ENCODE measurements at regions of chr5 and their contacts with region 1.

Region 1: GRCh38 chr5:116068028-116068632 is 16.7 kb upstream of the COMMD10 start:
- H3K4me3 Mint-ChIP-seq: no peak overlapping the region
- H3K27ac Mint-ChIP-seq: no peak overlapping the region
- H3K4me1 Mint-ChIP-seq: no peaks in the 10 kb centered on the region
- H3K27me3 Mint-ChIP-seq: no peaks in the 10 kb centered on the region

Region 2: GRCh38 chr5:115309751-115310370 is 758.3 kb before region 1 on chr5:
- intact Hi-C with region 1: loop called (anchors 2 kb)
- H3K4me3 Mint-ChIP-seq: no peak overlapping the region
- H3K27ac Mint-ChIP-seq: no peak overlapping the region
- H3K4me1 Mint-ChIP-seq: no peaks in the 10 kb centered on the region
- H3K27me3 Mint-ChIP-seq: peaks cover 17% of the 10 kb centered on the region

Region 3: DNA sequence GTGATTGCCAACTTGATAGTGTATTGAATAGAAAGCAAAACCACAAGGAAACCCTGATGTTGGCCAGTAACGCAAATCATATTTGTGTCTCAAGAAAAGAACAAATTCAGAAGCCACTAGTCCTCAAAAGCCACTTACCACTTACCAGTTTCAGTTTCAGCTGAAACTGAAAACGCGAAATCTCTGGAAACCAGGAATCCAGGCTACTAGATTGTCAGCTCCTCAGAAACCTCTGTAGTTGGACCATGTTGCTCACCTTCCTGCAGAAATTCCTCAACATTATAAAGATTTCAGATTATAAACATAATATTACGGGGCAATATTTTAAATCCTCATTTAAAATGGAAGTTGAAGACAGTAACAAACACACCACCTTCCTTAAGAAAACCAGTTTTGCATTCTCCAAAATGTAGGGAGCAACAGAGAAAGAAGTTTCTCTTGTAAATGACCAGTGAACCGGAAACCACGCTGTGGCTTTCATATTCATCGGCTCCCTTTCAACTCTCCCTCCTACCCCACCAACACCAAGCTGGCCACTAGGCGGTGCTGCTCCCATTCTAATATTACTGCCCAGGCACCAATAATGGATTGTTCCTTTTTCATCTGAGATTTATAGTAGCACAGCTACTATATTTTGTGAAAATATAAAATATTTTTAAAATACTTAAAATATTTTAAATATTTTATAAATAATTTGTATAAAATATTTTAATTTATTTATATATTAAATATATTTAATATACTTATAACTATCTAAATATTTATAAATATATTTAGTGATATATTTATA is 433.6 kb before region 1 on chr5:
- intact Hi-C with region 1: loop called (anchors 2 kb)
- H3K4me3 Mint-ChIP-seq: peak overlapping the region; percentile 64
- H3K27ac Mint-ChIP-seq: peak overlapping the region; percentile 69
- H3K4me1 Mint-ChIP-seq: peaks cover 10% of the 10 kb centered on the region
- H3K27me3 Mint-ChIP-seq: peaks cover 4% of the 10 kb centered on the region